ENCODE measurements at regions of chr11 and their contacts with region 1.

Region 1: DNA sequence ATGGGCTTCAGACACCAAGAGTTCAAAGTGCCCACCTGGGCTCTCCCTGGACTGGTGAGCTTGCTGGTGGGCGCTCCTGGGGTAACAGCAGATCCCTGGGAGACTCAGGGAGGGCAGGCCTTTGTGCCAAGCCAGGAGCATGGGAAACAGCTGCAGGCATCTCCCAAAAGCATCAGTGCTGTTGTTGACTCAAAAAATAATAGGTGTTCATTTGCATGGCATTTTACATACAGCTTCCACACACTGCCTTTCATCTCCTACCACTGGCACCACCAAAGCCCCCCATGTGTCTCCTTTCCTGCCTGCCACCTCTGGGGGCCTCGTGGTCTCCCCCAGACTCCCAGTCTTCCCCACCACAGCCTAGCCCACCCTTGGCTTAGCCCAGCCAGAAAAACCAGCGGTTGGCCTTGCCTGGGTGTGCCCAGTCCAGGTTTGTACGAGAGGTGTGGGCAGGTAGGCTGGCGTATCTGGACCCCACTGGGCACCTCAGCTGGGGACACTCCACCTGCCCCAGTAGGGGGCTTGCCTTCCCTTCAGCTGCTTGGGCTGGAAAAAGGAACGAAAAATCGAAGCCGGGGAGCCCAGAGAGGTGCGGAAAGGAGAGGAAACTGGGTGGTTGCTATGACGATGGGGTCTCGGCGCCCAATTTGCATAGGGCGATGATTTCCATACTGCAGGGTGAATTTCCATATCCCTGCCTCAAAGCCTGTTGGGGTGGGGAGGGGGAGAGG is 15.0 kb downstream of the POU2F3 start:
- DNase-seq: no peak
- ATAC-seq: no peak
- H3K4me3 ChIP-seq: no peak overlapping the region
- H3K27ac ChIP-seq: no peak overlapping the region
- H3K4me1 ChIP-seq: peaks cover 0 to 17% (median 2%) of the 10 kb centered on the region in 12 donors
- H3K27me3 ChIP-seq: peaks cover 0 to 65% (median 32%) of the 10 kb centered on the region in 9 donors
- CTCF ChIP-seq: no peak
- POLR2A ChIP-seq: no peak

Region 2: DNA sequence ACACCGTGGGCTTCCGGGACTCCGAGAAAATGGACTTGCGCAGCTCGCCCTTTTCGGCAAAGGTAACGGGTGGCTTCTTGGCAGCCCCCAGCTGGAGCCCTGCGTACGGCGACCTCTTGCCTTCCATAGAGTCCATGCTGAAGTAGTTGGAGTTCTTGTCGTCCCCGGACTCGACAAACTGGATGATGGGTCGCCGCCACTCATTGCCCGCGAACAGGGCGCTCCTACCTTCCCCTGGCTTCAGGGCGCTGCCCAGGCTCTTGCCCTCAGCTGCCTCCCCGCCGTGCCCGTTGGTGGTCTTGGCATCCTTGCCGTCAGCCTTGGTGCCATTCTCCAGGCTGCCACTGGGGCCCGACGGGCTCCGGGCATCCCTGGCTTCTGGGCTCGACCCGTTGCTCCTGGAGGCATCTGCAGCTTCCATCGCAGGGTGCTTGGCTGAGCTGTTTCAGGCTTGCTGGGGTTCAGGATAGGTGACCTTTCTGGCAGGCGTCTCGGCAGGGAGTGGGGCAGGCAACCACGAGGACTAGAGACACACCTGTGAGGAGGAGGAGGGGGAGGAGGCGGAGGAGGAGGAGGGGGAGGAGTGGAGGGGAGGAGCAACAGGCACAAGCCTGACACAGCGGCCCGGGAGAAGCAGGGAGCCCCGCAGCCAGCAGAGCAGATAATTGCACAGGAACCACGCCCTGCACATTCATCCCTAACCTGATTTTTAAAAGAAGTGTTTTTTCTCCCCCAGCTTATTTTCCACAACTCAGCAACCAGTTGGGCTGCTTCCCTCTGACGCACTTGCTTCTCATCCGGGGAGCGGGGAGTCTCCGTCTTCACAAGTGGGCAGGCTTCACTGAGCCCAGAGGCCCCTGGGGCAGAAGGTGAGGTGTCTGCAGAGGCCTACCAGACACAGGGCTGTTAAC is 117.1 kb before region 1 on chr11 and contains the start of gene TRIM29:
- intact Hi-C with region 1: no loop called
- DNase-seq: peak in 2 of 5 donors; percentile 2 to 12
- ATAC-seq: no peak
- H3K4me3 ChIP-seq: no peak within 1 kb of the TSS
- H3K27ac ChIP-seq: no peak within 1 kb of the TSS
- H3K4me1 ChIP-seq: no peaks in the 10 kb centered on the region
- H3K27me3 ChIP-seq: peaks cover 0 to 13% (median 0%) of the 10 kb centered on the region in 9 donors
- CTCF ChIP-seq: no peak
- POLR2A ChIP-seq: no peak
- total RNA-seq, gene TRIM29: 0.56 to 6.4 TPM in 2 of 9 donors, not detected in the others

Region 3: GRCh38 chr11:120182790-120183491 is 72.0 kb before region 1 on chr11:
- intact Hi-C with region 1: no loop called
- DNase-seq: peak in 4 of 5 donors; percentile 45 to 66 (median 62)
- ATAC-seq: no peak
- H3K4me3 ChIP-seq: no peak overlapping the region
- H3K27ac ChIP-seq: peak overlapping the region in 10 of 12 donors; percentile 62 to 96 (median 81)
- H3K4me1 ChIP-seq: peaks cover 0 to 87% (median 37%) of the 10 kb centered on the region in 12 donors
- H3K27me3 ChIP-seq: peaks cover 0 to 5% (median 0%) of the 10 kb centered on the region in 9 donors
- CTCF ChIP-seq: peak in 11 of 12 donors; percentile 14 to 51 (median 26)
- POLR2A ChIP-seq: no peak

Region 4: DNA sequence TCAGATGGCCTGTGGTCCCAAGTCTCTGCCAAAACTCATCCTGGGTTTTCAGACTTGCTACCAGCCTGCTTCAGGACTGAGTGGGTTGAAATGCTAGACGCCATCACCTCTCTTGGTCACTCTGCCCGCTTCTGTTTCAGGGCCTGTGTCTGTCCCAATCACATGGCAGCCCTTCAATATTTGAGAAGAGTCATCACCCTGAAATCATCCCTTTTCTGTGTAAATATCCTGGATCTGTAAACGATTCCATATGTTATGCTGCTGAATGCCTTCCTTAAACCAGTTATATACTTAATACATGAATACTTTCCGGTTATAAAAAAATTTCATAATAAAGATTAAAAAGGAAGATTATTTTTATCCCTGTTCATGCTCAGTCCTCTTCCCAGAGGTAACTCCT is 30.3 kb after region 1 on chr11:
- intact Hi-C with region 1: loop called in 1 of 10 experiments (anchors 5 kb)
- DNase-seq: no peak
- ATAC-seq: no peak
- H3K4me3 ChIP-seq: no peak overlapping the region
- H3K27ac ChIP-seq: no peak overlapping the region
- H3K4me1 ChIP-seq: peaks cover 0 to 13% (median 2%) of the 10 kb centered on the region in 12 donors
- H3K27me3 ChIP-seq: peaks cover 0 to 3% (median 0%) of the 10 kb centered on the region in 9 donors
- CTCF ChIP-seq: no peak
- POLR2A ChIP-seq: no peak

Region 5: GRCh38 chr11:120295084-120295483 is 40.1 kb after region 1 on chr11:
- intact Hi-C with region 1: loop called in 1 of 10 experiments (anchors 5 kb)
- DNase-seq: no peak
- ATAC-seq: peak in 2 of 4 donors; percentile 22 to 53
- H3K4me3 ChIP-seq: no peak overlapping the region
- H3K27ac ChIP-seq: no peak overlapping the region
- H3K4me1 ChIP-seq: peaks cover 0 to 6% (median 0%) of the 10 kb centered on the region in 12 donors
- H3K27me3 ChIP-seq: peaks cover 0 to 58% (median 9%) of the 10 kb centered on the region in 9 donors
- CTCF ChIP-seq: no peak
- POLR2A ChIP-seq: no peak